Posterior vena cava (tissue), 2 donors: ENCODE measurements at regions of chr5 and their contacts with region 1.

Region 1: GRCh38 chr5:151223469-151224264 is at the start of gene CCDC69:
- DNase-seq: peak; percentile 92
- total RNA-seq, gene CCDC69: 70.6 to 72.4 TPM

Region 2: GRCh38 chr5:151174612-151175101 is 49.0 kb before region 1 on chr5:
- intact Hi-C with region 1: loop called in 1 of 2 experiments (anchors 10 kb)
- DNase-seq: peak; percentile 74